ENCODE measurements at regions of chr14 and their contacts with region 1.

Region 1: DNA sequence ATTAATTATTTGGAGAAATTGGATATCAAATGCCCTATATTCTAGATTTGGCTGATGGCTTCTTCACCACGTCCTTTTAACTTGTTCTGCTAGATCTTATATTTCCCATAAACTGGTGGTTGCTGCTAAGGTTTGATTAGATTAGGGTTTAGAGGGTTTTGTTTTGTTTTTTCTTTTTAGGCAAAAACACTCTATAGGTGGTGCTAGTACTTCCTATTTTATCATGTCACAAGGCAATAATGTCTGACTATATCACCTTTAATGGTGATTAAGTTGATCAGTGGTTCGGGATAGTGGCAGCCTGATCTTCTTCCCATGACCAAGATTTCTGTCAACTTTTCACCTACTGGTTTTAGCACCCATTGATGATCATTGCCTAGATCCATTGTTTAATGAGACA is 455.1 kb downstream of the RAD51B start:
- DNase-seq: no peak
- ATAC-seq: no peak
- H3K4me3 Mint-ChIP-seq: peak overlapping the region; percentile 65
- H3K27ac Mint-ChIP-seq: peak overlapping the region; percentile 99
- H3K4me1 Mint-ChIP-seq: peaks cover 93% of the 10 kb centered on the region
- H3K27me3 Mint-ChIP-seq: no peaks in the 10 kb centered on the region
- CTCF ChIP-seq: no peak

Region 2: DNA sequence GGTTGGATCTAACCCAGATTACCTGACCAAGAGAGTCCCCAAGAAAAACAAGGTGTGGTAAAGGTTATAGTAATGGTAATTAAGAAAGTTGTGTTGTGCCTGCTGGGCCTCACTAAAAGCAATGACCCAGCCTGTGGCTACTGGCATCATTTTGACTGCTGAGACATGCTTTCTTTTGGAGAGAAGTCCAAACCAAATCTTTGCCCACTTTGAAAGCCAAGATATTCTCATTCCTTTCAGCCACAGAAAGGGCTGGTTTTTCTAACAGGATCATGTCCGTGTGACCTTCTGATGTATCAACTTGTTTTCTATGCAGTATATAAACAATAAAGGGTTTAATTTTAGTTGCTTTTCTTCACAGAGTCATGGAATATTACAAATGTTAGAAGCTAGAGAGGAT is 66.5 kb before region 1 on chr14:
- CTCF ChIA-PET with region 1: no interaction called
- POLR2A ChIA-PET with region 1: no interaction called
- intact Hi-C with region 1: no loop called
- DNase-seq: no peak
- ATAC-seq: no peak
- H3K4me3 Mint-ChIP-seq: no peak overlapping the region
- H3K27ac Mint-ChIP-seq: no peak overlapping the region
- H3K4me1 Mint-ChIP-seq: peaks cover 43% of the 10 kb centered on the region
- H3K27me3 Mint-ChIP-seq: no peaks in the 10 kb centered on the region
- CTCF ChIP-seq: no peak

Region 3: DNA sequence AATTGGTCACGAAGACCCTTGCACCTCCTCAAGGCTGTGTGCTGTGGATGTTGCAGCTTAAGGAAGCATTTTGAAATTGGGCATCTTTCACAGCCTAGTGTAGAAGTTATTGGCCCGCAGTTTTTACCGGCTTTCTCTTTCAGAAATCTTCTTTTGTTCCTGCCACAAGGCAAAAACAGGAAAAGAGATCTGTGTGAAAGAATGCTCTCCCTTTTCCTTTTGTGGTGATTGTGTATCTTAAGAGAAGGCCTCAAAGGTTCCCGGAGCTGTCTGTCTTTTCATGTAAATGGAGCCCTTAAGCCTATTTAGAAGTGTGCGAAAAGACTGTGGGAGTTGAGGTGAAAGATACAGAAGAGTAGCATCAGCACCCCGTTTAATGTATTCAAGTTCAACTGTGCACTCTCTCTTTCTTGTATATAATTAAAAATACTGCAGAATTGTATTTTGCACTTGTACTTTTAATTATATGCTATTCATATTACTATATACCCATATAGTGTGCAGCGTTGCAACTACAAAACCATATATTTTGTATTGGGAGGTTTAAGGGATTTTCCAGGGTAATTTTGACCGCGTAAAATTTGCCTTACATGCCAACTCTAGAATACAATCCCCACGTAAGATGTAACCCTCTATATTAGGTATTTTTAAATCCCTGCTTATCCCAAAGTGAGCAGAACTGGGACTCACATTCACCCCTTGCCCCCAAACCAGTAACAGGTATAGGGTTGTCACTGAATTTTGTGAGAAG is 13.5 kb before region 1 on chr14:
- CTCF ChIA-PET with region 1: interaction called, 6 read pairs
- POLR2A ChIA-PET with region 1: interaction called, 375 read pairs
- intact Hi-C with region 1: no loop called
- DNase-seq: no peak
- ATAC-seq: peak; percentile 56
- H3K4me3 Mint-ChIP-seq: peak overlapping the region; percentile 51
- H3K27ac Mint-ChIP-seq: peak overlapping the region; percentile 96
- H3K4me1 Mint-ChIP-seq: peaks cover 81% of the 10 kb centered on the region
- H3K27me3 Mint-ChIP-seq: no peaks in the 10 kb centered on the region
- CTCF ChIP-seq: no peak

Region 4: GRCh38 chr14:68307014-68307789 is 32.5 kb after region 1 on chr14:
- CTCF ChIA-PET with region 1: no interaction called
- POLR2A ChIA-PET with region 1: interaction called, 251 read pairs
- intact Hi-C with region 1: no loop called
- DNase-seq: no peak
- ATAC-seq: no peak
- H3K4me3 Mint-ChIP-seq: no peak overlapping the region
- H3K27ac Mint-ChIP-seq: peak overlapping the region; percentile 84
- H3K4me1 Mint-ChIP-seq: peaks cover 72% of the 10 kb centered on the region
- H3K27me3 Mint-ChIP-seq: no peaks in the 10 kb centered on the region
- CTCF ChIP-seq: no peak

Region 5: DNA sequence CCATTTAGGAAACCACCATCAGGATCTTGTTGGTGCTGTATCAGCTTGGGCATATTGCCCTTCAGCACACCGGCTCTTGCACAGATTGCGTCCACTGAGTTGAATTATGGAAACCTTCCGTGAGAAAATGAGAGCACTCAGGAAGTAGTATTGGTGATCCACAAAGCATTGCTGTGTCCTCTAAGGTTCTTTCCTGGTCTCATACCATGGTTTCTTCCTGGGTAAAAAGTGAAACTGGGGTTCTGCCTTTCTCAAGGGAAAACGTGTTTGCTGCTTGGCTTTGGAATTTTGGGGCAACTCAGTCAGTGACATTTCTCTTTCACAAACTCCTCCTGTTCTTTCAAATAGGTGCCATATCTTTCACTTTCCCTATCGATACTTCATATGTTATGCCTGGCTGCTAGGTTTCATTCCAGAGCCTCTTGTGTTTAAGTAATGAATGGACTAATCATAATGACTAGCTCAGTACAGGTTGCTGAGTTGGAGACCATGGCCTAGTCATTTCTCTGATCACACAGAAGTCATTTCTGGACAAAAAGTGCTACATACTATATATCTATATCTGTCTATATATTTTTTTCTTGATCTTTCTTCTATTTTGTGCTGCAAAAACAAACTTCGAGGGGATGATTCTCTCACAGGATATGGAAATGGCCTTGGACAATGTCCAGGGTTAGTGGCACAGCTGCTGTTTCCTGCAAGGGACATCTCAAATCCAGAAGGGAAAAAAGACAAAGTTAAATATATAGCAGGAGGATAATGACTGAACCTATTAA is 94.7 kb after region 1 on chr14:
- CTCF ChIA-PET with region 1: interaction called, 5 read pairs
- POLR2A ChIA-PET with region 1: interaction called, 13 read pairs
- intact Hi-C with region 1: no loop called
- DNase-seq: no peak
- ATAC-seq: peak; percentile 23
- H3K4me3 Mint-ChIP-seq: peak overlapping the region; percentile 59
- H3K27ac Mint-ChIP-seq: peak overlapping the region; percentile 95
- H3K4me1 Mint-ChIP-seq: peaks cover 94% of the 10 kb centered on the region
- H3K27me3 Mint-ChIP-seq: no peaks in the 10 kb centered on the region
- CTCF ChIP-seq: no peak

Region 6: GRCh38 chr14:68408680-68409079 is 134.0 kb after region 1 on chr14:
- CTCF ChIA-PET with region 1: interaction called, 3 read pairs
- POLR2A ChIA-PET with region 1: interaction called, 340 read pairs
- intact Hi-C with region 1: no loop called
- DNase-seq: no peak
- ATAC-seq: peak; percentile 53
- H3K4me3 Mint-ChIP-seq: peak overlapping the region; percentile 16
- H3K27ac Mint-ChIP-seq: peak overlapping the region; percentile 80
- H3K4me1 Mint-ChIP-seq: peaks cover 75% of the 10 kb centered on the region
- H3K27me3 Mint-ChIP-seq: no peaks in the 10 kb centered on the region
- CTCF ChIP-seq: no peak